Calu3 (cell line): ENCODE measurements at regions of chr9 and their contacts with region 1.

Region 1: GRCh38 chr9:23088932-23089366 is 642.3 kb downstream of the DMRTA1 start:
- DNase-seq: peak; percentile 14
- H3K4me3 Mint-ChIP-seq: no peak overlapping the region
- H3K27ac Mint-ChIP-seq: no peak overlapping the region
- H3K4me1 Mint-ChIP-seq: no peaks in the 10 kb centered on the region
- H3K27me3 Mint-ChIP-seq: no peaks in the 10 kb centered on the region
- CTCF ChIP-seq: no peak

Region 2: GRCh38 chr9:22813529-22813928 is 275.4 kb before region 1 on chr9:
- CTCF ChIA-PET with region 1: no interaction called
- intact Hi-C with region 1: loop called (anchors 1 kb)
- DNase-seq: no peak
- H3K4me3 Mint-ChIP-seq: no peak overlapping the region
- H3K27ac Mint-ChIP-seq: no peak overlapping the region
- H3K4me1 Mint-ChIP-seq: no peaks in the 10 kb centered on the region
- H3K27me3 Mint-ChIP-seq: peaks cover 19% of the 10 kb centered on the region
- CTCF ChIP-seq: no peak

Region 3: GRCh38 chr9:22970434-22970975 is 118.4 kb before region 1 on chr9:
- CTCF ChIA-PET with region 1: no interaction called
- intact Hi-C with region 1: no loop called
- DNase-seq: no peak
- H3K4me3 Mint-ChIP-seq: no peak overlapping the region
- H3K27ac Mint-ChIP-seq: no peak overlapping the region
- H3K4me1 Mint-ChIP-seq: no peaks in the 10 kb centered on the region
- H3K27me3 Mint-ChIP-seq: no peaks in the 10 kb centered on the region
- CTCF ChIP-seq: no peak